ENCODE measurements at regions of chr16 and their contacts with region 1.

Region 1: DNA sequence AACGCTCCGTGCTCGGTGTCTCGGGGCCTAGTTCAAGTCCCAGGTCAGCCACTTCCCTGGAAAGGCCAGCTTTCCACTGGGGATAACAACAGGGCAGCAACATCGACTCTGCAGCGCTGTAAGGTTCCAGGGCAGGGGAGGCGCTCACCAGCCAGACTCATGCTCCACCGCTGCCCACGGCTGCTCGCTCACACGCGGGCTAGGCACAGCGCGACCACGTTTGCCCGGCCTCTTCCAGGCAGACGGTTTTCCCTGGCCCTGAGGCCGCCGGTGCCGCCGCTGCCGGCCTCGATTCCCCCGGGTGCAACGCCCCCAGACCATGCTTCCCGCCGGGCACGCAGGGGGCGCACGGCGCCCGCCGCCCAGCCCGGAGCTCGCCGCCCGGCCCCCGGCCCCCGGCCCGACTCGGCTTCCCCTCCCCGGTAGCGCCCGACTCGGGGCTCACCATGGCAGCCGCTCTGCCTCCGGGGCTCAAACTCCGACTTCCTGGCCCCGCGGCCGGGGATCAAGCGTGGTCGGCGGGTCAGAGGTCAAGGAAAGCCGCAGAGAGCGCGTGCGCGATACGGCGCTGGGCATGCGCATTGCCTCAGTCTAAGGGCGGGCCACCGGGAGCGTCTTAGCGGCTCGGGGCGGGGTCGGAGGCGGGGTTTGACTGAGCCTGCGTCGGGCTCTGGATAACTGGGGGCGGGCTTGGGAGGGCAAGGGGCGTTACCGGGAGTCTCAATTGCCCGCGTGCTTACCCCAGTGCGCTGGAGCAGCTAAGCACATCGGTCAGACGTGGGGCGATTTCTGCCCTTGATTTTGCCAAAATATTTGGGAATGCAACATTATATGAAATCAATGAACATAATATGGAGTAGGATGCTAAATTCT is at the start of gene PAM16:
- DNase-seq: peak; percentile 99
- ATAC-seq: peak; percentile 96
- H3K4me3 Mint-ChIP-seq: peak within 1 kb of the TSS; percentile 89
- H3K27ac Mint-ChIP-seq: peak within 1 kb of the TSS; percentile 88
- H3K4me1 Mint-ChIP-seq: peaks cover 20% of the 10 kb centered on the region
- H3K27me3 Mint-ChIP-seq: no peaks in the 10 kb centered on the region
- total RNA-seq, gene PAM16: 62.8 to 67.8 TPM

Region 2: DNA sequence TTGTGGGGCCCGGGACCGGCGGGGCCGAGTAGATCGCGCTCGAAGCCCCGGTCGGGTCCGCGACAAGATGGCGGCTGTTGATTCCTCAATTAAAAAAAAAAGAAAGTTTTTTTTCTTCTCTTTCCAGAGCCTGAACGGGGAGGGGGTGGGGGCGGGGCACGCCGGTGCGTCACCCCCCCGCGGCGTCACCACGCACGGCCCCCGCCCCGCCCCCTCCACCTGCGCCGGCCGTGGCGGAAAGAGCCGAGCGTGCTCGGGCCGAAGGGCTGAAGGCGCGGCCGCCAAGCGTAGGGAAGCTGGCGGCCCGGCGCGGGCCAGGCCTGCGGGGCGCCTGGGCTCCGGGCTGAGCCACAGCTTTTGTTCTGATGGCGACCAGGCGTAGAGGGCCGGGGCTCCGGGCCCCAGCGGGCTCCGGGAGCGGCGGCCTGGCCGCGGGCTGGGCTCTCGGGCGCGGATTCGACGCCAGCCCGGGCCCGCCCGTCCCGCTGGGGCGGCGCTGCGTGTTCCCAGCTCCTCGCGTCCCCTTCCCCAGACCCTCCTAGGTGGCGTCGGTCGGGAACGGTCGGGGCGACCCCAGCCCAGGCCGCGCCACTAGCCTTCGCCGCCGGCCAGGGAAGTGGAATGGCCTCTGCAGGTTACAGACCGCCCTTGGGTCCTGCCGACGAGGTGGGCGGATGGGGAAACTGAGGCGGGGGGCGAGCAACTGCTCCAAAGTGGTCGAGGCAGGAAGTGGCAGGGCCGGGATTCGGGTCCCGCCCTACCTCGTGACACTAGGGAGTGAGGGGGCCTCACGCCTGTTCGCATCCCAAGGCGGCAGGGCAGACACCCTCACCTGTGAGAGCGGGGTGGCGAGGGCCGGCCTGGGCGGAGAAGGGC is 470.2 kb before region 1 on chr16 and contains the start of gene CREBBP:
- CTCF ChIA-PET with region 1: no interaction called
- POLR2A ChIA-PET with region 1: no interaction called
- intact Hi-C with region 1: loop called in 1 of 2 experiments (anchors 1 kb)
- DNase-seq: peak; percentile 93
- ATAC-seq: peak; percentile 89
- H3K4me3 Mint-ChIP-seq: peak within 1 kb of the TSS; percentile 79
- H3K27ac Mint-ChIP-seq: peak within 1 kb of the TSS; percentile 69
- H3K4me1 Mint-ChIP-seq: peaks cover 36% of the 10 kb centered on the region
- H3K27me3 Mint-ChIP-seq: peaks cover 6% of the 10 kb centered on the region
- total RNA-seq, gene CREBBP: 28.1 to 37.4 TPM

Region 3: GRCh38 chr16:4371357-4372000 is 20.5 kb after region 1 on chr16 and contains the start of gene VASN:
- CTCF ChIA-PET with region 1: interaction called, 4 read pairs
- POLR2A ChIA-PET with region 1: no interaction called
- intact Hi-C with region 1: loop called in 1 of 2 experiments (anchors 1 kb)
- DNase-seq: peak; percentile 81
- ATAC-seq: peak; percentile 94
- H3K4me3 Mint-ChIP-seq: peak within 1 kb of the TSS; percentile 59
- H3K27ac Mint-ChIP-seq: no peak within 1 kb of the TSS
- H3K4me1 Mint-ChIP-seq: peaks cover 12% of the 10 kb centered on the region
- H3K27me3 Mint-ChIP-seq: no peaks in the 10 kb centered on the region
- total RNA-seq, gene VASN: not detected

Region 4: GRCh38 chr16:4425378-4426020 is 74.5 kb after region 1 on chr16 and contains the start of gene DNAJA3:
- CTCF ChIA-PET with region 1: no interaction called
- POLR2A ChIA-PET with region 1: interaction called, 4 read pairs
- intact Hi-C with region 1: loop called in 1 of 2 experiments (anchors 1 kb)
- DNase-seq: peak; percentile 96
- ATAC-seq: peak; percentile 93
- H3K4me3 Mint-ChIP-seq: peak within 1 kb of the TSS; percentile 95
- H3K27ac Mint-ChIP-seq: peak within 1 kb of the TSS; percentile 98
- H3K4me1 Mint-ChIP-seq: peaks cover 27% of the 10 kb centered on the region
- H3K27me3 Mint-ChIP-seq: no peaks in the 10 kb centered on the region
- total RNA-seq, gene DNAJA3: 93.9 to 102 TPM

Region 5: DNA sequence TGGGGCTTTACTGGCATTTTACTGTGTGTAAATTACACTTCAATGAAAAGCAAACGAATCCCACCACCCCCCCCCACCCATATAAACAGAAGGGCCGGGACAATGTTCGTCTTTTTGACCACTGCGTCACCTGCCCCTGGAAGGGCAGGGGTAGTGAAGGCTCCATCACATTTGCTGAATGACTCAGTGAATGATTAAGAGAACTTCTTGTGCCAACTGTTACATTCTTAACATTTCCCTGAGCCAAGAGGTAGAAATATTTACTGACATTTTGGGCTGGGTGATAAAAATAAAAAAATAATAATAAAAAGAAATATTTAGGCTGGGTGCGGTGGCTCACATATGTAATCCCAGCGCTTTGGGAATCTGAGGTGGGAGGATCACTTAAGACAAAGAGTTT is 229.2 kb after region 1 on chr16:
- CTCF ChIA-PET with region 1: no interaction called
- POLR2A ChIA-PET with region 1: no interaction called
- intact Hi-C with region 1: loop called in 1 of 2 experiments (anchors 10 kb)
- DNase-seq: no peak
- ATAC-seq: no peak
- H3K4me3 Mint-ChIP-seq: no peak overlapping the region
- H3K27ac Mint-ChIP-seq: no peak overlapping the region
- H3K4me1 Mint-ChIP-seq: no peaks in the 10 kb centered on the region
- H3K27me3 Mint-ChIP-seq: no peaks in the 10 kb centered on the region

Region 6: GRCh38 chr16:4957720-4958509 is 606.9 kb after region 1 on chr16 and contains the start of gene SEC14L5:
- CTCF ChIA-PET with region 1: no interaction called
- POLR2A ChIA-PET with region 1: no interaction called
- intact Hi-C with region 1: loop called (anchors 2 to 10 kb)
- DNase-seq: peak; percentile 98
- ATAC-seq: peak; percentile 95
- H3K4me3 Mint-ChIP-seq: peak within 1 kb of the TSS; percentile 75
- H3K27ac Mint-ChIP-seq: peak within 1 kb of the TSS; percentile 1
- H3K4me1 Mint-ChIP-seq: peaks cover 12% of the 10 kb centered on the region
- H3K27me3 Mint-ChIP-seq: peaks cover 33% of the 10 kb centered on the region
- total RNA-seq, gene SEC14L5: 0.09 to 0.28 TPM